GM10248 (cell line): ENCODE measurements at regions of chr11 and their contacts with region 1.

Region 1: GRCh38 chr11:17389211-17389956 is 925 bp upstream of the KCNJ11 start:
- DNase-seq: peak; percentile 88
- CTCF ChIP-seq: peak; percentile 65

Region 2: DNA sequence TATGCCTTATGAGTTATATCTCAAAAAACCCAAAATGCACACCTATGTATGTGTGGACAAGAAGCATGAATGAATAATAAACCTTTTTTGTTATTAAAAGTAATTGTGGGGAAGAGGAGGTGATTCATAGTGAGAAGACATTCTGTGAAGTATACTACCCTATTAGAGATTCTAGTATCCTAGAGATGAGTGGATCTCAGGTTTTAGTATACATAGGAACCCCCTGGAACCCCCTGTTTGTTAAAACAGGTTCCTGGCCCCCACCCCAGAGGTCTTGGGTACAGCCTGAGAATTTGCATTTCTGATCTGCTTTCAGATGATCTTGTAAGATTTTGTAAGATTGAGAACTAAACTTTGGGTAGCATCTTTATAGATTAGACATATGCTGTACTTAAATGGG is 95.4 kb before region 1 on chr11:
- CTCF ChIA-PET with region 1: no interaction called
- POLR2A ChIA-PET with region 1: no interaction called
- DNase-seq: peak; percentile 26
- CTCF ChIP-seq: no peak

Region 3: DNA sequence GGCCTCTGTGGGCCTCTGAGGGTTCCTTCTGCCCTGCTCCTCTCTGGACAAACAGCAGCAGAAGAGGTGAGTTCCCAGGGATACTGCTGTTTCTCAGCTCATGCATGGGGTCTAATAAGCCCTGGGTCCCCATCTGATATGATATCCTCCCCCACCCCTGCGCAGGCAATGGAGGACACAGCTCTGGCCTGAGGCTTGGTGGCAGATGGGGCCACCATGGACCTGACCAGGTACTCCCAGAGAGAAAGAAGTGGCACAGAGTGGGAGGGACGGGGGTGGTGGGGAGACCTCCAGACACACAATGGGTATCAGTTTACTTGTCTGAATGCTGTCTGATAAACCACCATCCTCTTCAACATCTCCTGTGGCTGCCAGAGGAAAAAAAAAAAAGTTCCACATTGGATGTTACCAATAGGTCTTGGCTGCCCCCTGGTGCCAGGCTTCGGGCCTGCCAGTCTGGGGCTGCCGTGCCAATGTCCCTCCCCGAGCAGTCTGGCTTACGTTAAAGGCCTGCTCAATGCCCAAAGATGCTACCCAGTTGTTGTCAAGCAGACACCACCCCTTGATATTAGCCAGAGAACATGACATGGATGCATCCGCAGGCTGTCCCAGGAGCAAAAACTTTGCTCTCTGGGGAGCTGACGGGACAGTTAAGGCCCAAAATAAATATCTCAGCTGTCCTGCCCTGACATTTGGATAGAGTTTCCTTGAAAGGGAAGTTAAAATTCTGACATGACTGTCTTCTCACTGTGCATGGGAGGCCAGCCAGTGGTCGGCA is 115.1 kb after region 1 on chr11:
- CTCF ChIA-PET with region 1: interaction called, 110 read pairs
- POLR2A ChIA-PET with region 1: no interaction called
- DNase-seq: peak; percentile 77
- CTCF ChIP-seq: peak; percentile 90